CD14-positive monocyte (primary cell): ENCODE measurements at regions of chr4 and their contacts with region 1.

Region 1: DNA sequence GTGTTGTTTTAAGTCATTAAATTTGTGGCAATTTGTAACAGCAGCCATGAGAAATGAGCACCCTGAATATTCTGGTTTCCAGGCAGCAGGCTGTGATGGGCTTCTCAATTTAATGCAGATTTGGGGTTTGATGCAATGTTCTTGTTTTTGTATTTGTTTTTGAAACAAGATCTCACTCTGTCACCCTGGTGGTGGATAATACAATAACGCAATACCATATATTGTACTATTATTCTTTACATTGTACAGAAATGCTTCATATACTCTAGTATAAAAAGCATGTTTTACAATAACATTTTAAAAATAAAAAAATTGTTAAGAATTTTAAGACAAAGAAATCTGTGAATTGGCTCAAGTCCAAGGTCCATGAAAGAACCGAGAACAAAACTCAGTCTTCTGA is 129.1 kb downstream of the USP46 start:
- DNase-seq: no peak
- H3K4me3 ChIP-seq: no peak overlapping the region
- H3K4me3 Mint-ChIP-seq: no peak overlapping the region
- H3K27ac ChIP-seq: no peak overlapping the region
- H3K27ac Mint-ChIP-seq: no peak overlapping the region
- H3K4me1 ChIP-seq: no peaks in the 10 kb centered on the region
- H3K4me1 Mint-ChIP-seq: no peaks in the 10 kb centered on the region
- H3K27me3 ChIP-seq: no peaks in the 10 kb centered on the region
- H3K27me3 Mint-ChIP-seq: peaks cover 0 to 2% (median 0%) of the 10 kb centered on the region in 3 donors
- CTCF ChIP-seq: no peak

Region 2: DNA sequence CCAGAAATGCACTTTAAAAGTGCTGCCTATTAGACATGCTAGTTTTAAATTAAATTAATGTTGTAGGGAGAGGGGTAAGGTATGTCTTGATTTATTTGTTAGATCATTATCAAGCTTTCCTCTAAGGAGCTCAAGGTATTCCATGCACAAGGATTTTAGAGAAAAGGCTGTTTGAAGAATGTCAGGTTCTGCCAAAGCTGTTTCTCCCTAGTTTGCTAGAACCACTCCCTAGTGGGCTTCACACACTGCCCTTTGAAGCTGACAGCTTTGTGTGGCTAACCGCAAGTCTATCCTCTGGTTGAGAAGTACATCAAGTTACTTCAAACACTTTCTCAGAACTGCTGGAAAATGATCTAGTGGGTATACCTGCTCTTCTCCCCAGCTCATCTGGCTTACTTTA is 364.5 kb after region 1 on chr4:
- intact Hi-C with region 1: loop called in 1 of 2 experiments (anchors 10 kb)
- DNase-seq: no peak
- H3K4me3 ChIP-seq: no peak overlapping the region
- H3K4me3 Mint-ChIP-seq: no peak overlapping the region
- H3K27ac ChIP-seq: no peak overlapping the region
- H3K27ac Mint-ChIP-seq: no peak overlapping the region
- H3K4me1 ChIP-seq: no peaks in the 10 kb centered on the region
- H3K4me1 Mint-ChIP-seq: no peaks in the 10 kb centered on the region
- H3K27me3 ChIP-seq: no peaks in the 10 kb centered on the region
- H3K27me3 Mint-ChIP-seq: peaks cover 0 to 1% (median 0%) of the 10 kb centered on the region in 3 donors
- CTCF ChIP-seq: no peak